Naive thymus-derived CD4-positive, alpha-beta T cell (primary cell): ENCODE measurements at regions of chr16 and their contacts with region 1.

Region 1: GRCh38 chr16:4624015-4624826 is at the start of gene MGRN1:
- DNase-seq: peak; percentile 85 to 94 (median 90)
- ATAC-seq: peak; percentile 93
- H3K4me3 ChIP-seq: peak within 1 kb of the TSS; percentile 72
- H3K4me3 Mint-ChIP-seq: peak within 1 kb of the TSS; percentile 91 to 99 (median 94)
- H3K27ac ChIP-seq: peak within 1 kb of the TSS; percentile 83
- H3K27ac Mint-ChIP-seq: peak within 1 kb of the TSS; percentile 95 to 98 (median 97)
- H3K4me1 ChIP-seq: peaks cover 18 to 21% of the 10 kb centered on the region in 2 donors
- H3K4me1 Mint-ChIP-seq: peaks cover 25 to 43% (median 38%) of the 10 kb centered on the region in 7 donors
- H3K27me3 ChIP-seq: no peaks in the 10 kb centered on the region
- H3K27me3 Mint-ChIP-seq: no peaks in the 10 kb centered on the region
- total RNA-seq, gene MGRN1: 62.6 to 103 (median 81.2) TPM

Region 2: DNA sequence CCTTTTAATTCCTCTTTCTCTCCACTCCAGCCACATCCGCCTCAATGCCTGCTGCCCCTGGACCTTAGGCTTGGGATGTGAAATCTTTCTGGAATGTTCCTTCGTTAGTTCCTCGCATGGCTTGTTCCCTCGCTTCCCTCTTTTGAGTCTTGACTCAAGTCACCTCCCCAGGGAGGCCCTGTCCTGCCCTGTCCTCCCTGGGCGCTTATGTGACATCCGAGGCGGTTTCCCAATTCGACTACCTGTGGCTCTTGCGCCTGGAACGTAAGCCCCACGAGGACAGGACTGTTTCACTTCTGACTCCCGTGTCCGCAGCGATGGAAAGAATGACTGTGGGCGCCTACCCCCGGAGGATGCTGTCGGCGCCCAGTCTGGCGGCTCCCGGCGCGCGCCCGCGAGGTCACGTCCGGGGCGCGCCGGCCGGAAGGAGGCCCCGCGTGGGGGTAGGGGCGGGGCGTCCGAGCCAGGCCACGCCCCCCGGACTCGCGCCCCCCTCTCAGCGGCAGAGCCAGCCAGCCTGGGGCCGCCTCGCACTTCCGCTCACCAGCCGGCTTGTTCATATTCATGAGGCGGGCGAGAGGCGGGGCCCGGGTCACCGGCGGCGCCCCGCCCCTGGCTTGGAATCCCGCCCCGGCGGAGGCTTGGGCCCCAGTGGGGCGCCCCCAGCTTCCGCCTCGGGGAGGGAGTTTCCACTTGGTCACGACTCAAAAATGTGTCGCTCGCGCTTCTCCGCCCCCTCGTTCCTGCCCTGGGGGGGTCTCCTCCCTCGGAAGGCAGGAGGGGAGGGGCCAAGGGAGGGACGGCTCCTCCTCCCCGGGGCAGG is 316.8 kb before region 1 on chr16:
- CTCF ChIA-PET with region 1: no interaction called
- POLR2A ChIA-PET with region 1: interaction called, 3 read pairs
- intact Hi-C with region 1: loop called in 1 of 2 experiments (anchors 1 kb)
- DNase-seq: peak; percentile 97 to 98 (median 97)
- ATAC-seq: peak; percentile 96
- H3K4me3 ChIP-seq: peak overlapping the region; percentile 94
- H3K4me3 Mint-ChIP-seq: peak overlapping the region; percentile 90 to 98 (median 94)
- H3K27ac ChIP-seq: peak overlapping the region; percentile 90
- H3K27ac Mint-ChIP-seq: peak overlapping the region; percentile 94 to 99 (median 95)
- H3K4me1 ChIP-seq: peaks cover 15 to 17% of the 10 kb centered on the region in 2 donors
- H3K4me1 Mint-ChIP-seq: peaks cover 13 to 30% (median 23%) of the 10 kb centered on the region in 7 donors
- H3K27me3 ChIP-seq: no peaks in the 10 kb centered on the region
- H3K27me3 Mint-ChIP-seq: peaks cover 0 to 2% (median 0%) of the 10 kb centered on the region in 5 donors

Region 3: GRCh38 chr16:4475880-4476788 is 148.1 kb before region 1 on chr16 and contains the start of gene HMOX2:
- CTCF ChIA-PET with region 1: no interaction called
- POLR2A ChIA-PET with region 1: interaction called, 3 read pairs
- intact Hi-C with region 1: loop called in 1 of 2 experiments (anchors 2 kb)
- DNase-seq: peak; percentile 85 to 98 (median 92)
- ATAC-seq: peak; percentile 95
- H3K4me3 ChIP-seq: peak within 1 kb of the TSS; percentile 89
- H3K4me3 Mint-ChIP-seq: peak within 1 kb of the TSS; percentile 90 to 96 (median 94)
- H3K27ac ChIP-seq: peak within 1 kb of the TSS; percentile 92
- H3K27ac Mint-ChIP-seq: peak within 1 kb of the TSS; percentile 83 to 95 (median 91)
- H3K4me1 ChIP-seq: peaks cover 29 to 38% of the 10 kb centered on the region in 2 donors
- H3K4me1 Mint-ChIP-seq: peaks cover 25 to 53% (median 40%) of the 10 kb centered on the region in 7 donors
- H3K27me3 ChIP-seq: no peaks in the 10 kb centered on the region
- H3K27me3 Mint-ChIP-seq: no peaks in the 10 kb centered on the region
- total RNA-seq, gene HMOX2: 44.6 to 84.9 (median 61.0) TPM

Region 4: DNA sequence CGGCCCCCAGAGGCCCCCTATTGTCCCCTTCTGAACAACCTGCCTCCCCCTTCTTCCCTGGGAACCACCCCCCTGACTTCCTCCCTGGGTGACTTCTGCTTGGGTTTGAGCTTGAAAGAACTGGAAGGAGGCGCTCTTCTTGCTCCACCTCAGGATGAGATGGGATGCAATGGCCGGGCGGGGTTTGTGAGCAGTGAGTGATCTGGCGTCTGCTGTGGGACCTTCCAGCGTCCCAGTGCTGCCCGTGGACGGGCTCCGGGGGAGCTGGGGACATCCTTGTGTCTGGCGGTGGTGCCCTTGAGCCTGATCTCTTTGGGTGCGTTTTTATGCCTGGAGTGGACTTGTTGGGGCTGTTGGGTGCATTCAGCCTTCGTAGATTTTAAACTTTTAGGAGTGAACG is 12.0 kb after region 1 on chr16:
- CTCF ChIA-PET with region 1: interaction called, 3 read pairs
- POLR2A ChIA-PET with region 1: interaction called, 5 read pairs
- intact Hi-C with region 1: loop called in 1 of 2 experiments (anchors 1 kb)
- DNase-seq: no peak
- ATAC-seq: no peak
- H3K4me3 ChIP-seq: no peak overlapping the region
- H3K4me3 Mint-ChIP-seq: no peak overlapping the region
- H3K27ac ChIP-seq: no peak overlapping the region
- H3K27ac Mint-ChIP-seq: peak overlapping the region in 2 of 9 donors; percentile 10 to 46
- H3K4me1 ChIP-seq: no peaks in the 10 kb centered on the region
- H3K4me1 Mint-ChIP-seq: peaks cover 16 to 44% (median 24%) of the 10 kb centered on the region in 7 donors
- H3K27me3 ChIP-seq: no peaks in the 10 kb centered on the region
- H3K27me3 Mint-ChIP-seq: no peaks in the 10 kb centered on the region

Region 5: DNA sequence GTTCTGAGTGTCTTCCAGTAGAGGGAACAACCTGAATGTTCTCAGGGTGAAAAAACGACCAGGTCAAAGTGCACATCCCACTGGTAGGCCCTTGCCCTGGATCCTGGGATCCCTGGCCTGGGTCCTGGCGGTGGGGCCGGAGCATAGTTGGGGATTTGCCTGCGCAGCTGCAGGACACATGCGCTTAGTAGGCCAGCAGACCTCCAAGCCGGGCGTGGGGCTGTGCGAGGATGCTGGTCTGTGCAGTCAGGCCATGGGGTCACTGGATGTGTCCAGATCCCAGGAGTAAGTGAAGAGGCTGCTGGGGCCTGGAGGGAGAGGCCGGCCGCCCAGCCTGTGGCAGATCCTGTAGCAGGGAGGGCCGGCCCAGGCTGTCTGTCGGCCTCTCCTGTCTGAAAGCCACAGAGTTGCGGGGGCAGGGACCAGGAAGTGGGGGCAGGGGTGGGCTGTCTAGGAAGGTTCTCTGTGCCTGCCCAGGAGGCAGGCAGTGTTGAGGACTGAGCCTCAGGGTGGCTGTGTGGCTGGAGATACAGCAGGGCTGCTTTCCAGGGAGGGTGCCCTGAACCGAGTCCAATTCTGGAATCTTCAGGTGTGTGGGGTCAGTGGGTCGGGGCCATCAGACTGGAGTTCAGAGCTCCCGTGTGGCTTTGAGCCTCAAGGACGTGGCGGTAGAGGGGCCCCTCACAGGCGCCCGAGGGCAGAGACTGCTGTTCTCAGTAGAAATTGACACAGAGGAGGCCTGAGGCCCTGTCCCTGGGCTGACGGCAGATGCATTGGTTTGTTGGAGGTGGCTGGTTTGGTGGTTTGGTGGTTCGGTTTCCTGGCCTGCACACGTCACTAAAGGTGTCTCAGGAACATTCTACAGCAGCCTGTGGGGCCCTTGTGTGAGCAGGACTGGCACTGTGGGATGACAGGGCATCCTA is 51.9 kb after region 1 on chr16:
- CTCF ChIA-PET with region 1: no interaction called
- POLR2A ChIA-PET with region 1: no interaction called
- intact Hi-C with region 1: loop called (anchors 1 kb)
- DNase-seq: peak in 8 of 9 donors; percentile 62 to 80 (median 76)
- ATAC-seq: peak; percentile 82
- H3K4me3 ChIP-seq: peak overlapping the region; percentile 32
- H3K4me3 Mint-ChIP-seq: peak overlapping the region; percentile 57 to 86 (median 84)
- H3K27ac ChIP-seq: peak overlapping the region; percentile 78
- H3K27ac Mint-ChIP-seq: peak overlapping the region; percentile 92 to 99 (median 98)
- H3K4me1 ChIP-seq: peaks cover 19 to 28% of the 10 kb centered on the region in 2 donors
- H3K4me1 Mint-ChIP-seq: peaks cover 29 to 36% (median 31%) of the 10 kb centered on the region in 7 donors
- H3K27me3 ChIP-seq: no peaks in the 10 kb centered on the region
- H3K27me3 Mint-ChIP-seq: no peaks in the 10 kb centered on the region

Region 6: DNA sequence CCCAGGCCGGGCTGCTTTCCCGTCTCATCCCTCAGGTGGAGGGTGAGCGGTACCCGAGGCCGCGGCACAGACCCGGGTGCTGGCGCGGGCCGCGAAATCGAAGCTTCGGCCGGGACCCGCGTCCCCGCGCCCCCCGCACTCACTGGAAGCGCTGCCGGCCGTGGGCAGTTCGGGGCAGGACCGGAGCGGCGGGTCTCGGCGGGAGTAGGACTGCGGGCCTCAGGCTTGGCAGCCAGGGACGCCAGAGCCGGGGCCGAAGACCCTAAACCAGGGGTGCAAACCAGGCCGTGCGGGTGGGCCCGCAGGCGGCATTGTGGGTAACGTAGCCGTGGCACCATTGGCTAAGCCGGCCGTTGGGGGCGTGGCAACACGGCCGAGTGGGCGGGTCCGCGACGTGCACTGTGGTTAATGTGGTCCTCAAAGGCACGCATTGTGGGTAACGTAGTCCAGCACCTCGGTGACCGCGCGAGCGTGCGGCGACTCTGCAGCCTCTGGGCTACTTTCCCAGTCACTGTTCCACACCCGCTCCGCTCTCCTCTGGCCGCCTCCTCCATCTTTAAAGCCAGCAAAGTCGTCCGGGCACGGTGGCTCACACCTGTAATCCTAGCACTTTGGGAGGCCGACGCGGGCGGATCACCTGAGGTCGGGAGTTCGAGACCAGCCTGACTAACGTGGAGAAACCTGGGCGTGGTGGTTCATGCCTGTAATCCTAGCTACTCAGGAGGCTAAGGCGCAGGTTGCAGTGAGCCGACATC is 142.8 kb after region 1 on chr16 and contains the start of gene ZNF500:
- CTCF ChIA-PET with region 1: no interaction called
- POLR2A ChIA-PET with region 1: no interaction called
- intact Hi-C with region 1: loop called (anchors 1 kb)
- DNase-seq: peak; percentile 90 to 98 (median 92)
- ATAC-seq: peak; percentile 99
- H3K4me3 ChIP-seq: peak within 1 kb of the TSS; percentile 82
- H3K4me3 Mint-ChIP-seq: peak within 1 kb of the TSS; percentile 90 to 94 (median 92)
- H3K27ac ChIP-seq: peak within 1 kb of the TSS; percentile 84
- H3K27ac Mint-ChIP-seq: peak within 1 kb of the TSS; percentile 86 to 96 (median 92)
- H3K4me1 ChIP-seq: peaks cover 17 to 19% of the 10 kb centered on the region in 2 donors
- H3K4me1 Mint-ChIP-seq: peaks cover 24 to 49% (median 34%) of the 10 kb centered on the region in 7 donors
- H3K27me3 ChIP-seq: no peaks in the 10 kb centered on the region
- H3K27me3 Mint-ChIP-seq: no peaks in the 10 kb centered on the region
- total RNA-seq, gene ZNF500: 13.8 to 43.0 (median 24.7) TPM

Region 7: GRCh38 chr16:5438591-5438990 is 814.4 kb after region 1 on chr16:
- CTCF ChIA-PET with region 1: no interaction called
- POLR2A ChIA-PET with region 1: no interaction called
- intact Hi-C with region 1: no loop called
- DNase-seq: no peak
- ATAC-seq: no peak
- H3K4me3 ChIP-seq: no peak overlapping the region
- H3K4me3 Mint-ChIP-seq: no peak overlapping the region
- H3K27ac ChIP-seq: no peak overlapping the region
- H3K27ac Mint-ChIP-seq: no peak overlapping the region
- H3K4me1 ChIP-seq: no peaks in the 10 kb centered on the region
- H3K4me1 Mint-ChIP-seq: no peaks in the 10 kb centered on the region
- H3K27me3 ChIP-seq: no peaks in the 10 kb centered on the region
- H3K27me3 Mint-ChIP-seq: peaks cover 0 to 21% (median 10%) of the 10 kb centered on the region in 5 donors